OCI-LY7 (cell line): ENCODE measurements at regions of chr18 and their contacts with region 1.

Region 1: DNA sequence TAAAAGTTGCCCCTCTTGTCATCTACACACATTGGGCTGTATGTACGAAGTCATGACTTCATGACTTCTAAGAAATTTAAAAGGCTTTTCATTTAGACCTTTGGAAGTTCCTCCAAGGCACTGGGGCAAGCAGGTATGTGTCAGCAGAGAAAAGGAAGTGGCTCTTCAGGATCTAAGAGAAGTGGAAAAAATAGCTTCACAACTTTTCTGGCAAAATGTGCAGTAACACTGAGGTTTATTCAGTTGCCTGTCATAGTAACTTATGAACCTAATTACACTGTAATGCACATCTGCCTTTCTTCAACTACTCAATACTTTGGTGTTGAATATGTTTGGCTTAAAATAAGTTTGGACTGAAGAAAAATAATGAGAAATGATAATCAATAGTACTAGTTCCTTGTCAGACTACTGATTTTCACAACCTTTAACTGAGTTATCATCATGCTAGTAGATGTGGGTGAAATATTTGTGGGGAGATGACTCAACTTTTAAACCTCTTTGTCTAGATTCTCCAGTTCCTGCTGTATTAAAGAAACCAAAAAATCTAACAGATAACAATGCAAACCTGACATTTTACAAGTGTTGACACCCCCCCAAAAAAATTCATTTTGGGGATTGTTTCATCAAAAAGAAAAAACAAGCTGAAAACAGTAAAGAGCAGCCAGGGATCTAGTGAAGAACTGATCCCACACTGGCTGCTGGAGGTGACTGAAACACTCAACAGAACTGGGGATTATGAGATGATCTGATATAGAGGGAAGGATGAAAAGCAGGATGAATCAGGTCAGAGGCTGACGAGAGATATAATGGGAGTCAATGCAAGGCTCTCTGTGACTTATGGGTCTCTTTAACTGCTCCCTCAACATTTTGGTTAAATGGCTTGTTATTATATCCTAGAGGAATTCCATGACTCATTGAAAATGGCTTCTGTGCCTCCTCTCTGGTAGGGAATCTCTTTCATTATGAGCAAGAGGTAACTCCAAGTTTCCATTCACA is 84.6 kb downstream of the COLEC12 start:
- DNase-seq: no peak
- H3K4me3 ChIP-seq: no peak overlapping the region
- H3K27ac ChIP-seq: no peak overlapping the region
- H3K4me1 ChIP-seq: no peaks in the 10 kb centered on the region
- CTCF ChIP-seq: no peak

Region 2: DNA sequence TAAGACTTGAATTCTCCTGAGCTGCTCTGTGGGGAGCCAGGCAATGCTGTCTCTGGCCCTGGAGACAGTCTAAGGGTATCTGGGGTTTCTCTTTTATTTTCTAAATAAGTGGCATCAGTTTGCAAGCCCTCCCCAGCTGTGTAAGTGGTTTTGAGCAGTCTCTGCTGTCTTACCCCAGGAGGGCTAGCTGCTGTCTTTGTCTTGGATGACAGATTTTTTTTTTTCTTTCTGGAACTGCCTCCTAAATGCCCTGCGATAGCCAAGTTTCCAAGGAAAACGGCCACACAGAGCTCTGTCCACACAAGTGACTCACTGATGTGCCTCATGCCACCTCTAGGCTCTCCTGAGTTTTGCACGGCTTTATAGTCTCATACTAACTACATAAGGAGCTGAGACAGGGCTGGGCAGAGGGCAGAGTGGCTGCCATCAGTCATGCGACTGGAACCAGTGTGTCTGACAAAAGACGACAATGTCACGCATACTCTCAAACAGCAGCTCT is 110.9 kb before region 1 on chr18:
- CTCF ChIA-PET with region 1: no interaction called
- POLR2A ChIA-PET with region 1: no interaction called
- intact Hi-C with region 1: no loop called
- DNase-seq: no peak
- H3K4me3 ChIP-seq: no peak overlapping the region
- H3K27ac ChIP-seq: no peak overlapping the region
- H3K4me1 ChIP-seq: no peaks in the 10 kb centered on the region
- CTCF ChIP-seq: no peak

Region 3: DNA sequence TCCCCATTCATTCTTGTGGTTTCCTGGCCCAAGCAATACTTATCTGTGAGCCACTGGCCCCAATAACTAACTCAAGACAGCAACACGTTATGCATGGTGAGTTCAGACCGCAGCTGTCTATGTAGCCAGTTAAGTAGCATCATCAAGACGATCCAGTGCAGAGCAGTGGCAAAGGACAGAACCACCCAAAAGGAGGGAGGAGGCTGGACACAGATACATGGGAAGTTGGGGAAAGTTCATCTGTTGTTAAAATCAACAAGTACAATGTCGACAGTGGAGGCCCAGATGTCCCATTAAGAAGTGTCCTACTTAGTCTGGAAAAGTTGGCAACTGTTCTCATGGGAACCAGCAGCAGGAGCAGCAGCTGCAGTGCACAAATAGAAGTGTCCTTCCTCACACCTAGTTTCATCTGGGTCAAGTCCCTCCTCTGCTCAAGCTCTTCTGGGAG is 41.2 kb before region 1 on chr18:
- CTCF ChIA-PET with region 1: no interaction called
- POLR2A ChIA-PET with region 1: no interaction called
- intact Hi-C with region 1: no loop called
- DNase-seq: no peak
- H3K4me3 ChIP-seq: no peak overlapping the region
- H3K27ac ChIP-seq: no peak overlapping the region
- H3K4me1 ChIP-seq: no peaks in the 10 kb centered on the region
- CTCF ChIP-seq: no peak

Region 4: DNA sequence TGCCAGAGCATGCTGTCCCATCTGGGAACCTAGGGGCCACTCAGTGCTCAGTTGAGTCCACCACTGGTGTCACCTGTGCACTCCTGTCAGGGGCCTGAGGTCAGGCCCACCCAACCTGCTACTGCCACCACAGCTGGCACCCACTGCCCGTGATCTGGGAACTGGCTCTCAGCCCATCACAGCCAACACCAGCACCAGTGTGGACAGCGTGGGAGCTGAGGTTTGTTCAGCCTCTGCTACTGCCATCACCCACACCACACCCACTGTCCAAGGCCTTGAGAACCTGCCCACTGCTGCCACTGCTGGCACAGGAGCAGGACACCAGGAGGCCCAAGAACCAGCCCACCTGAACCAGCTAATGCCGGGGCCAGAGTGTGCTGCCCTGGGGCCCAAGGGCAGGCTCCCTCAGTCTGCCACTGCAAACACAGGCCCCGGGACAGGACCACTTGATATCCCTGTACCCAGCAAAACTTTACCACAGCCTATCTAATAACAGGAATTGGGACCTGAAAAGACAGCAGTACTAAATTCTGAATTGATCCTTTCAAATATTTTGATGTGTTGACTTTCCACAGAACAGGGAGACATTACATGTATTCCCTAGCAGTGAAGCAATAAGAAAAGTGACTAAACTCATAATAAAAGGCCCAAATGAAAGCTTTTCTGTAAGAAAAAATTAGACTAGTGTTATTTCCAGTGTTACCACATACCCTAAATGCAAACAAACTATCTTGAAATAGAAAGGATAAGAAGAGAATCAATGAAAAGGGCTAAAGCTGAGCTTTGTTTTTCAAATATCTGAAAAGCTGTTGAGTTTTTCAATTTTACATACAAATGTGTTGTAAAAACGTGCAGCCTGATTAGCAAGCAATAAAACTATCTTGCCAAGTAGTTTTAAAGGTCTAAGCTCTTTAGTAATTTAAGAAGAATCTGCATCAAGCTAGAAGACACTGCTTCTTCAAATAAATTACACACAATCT is 1514.7 kb after region 1 on chr18:
- CTCF ChIA-PET with region 1: no interaction called
- POLR2A ChIA-PET with region 1: interaction called, 10 read pairs
- intact Hi-C with region 1: no loop called
- DNase-seq: no peak
- H3K4me3 ChIP-seq: no peak overlapping the region
- H3K27ac ChIP-seq: no peak overlapping the region
- H3K4me1 ChIP-seq: no peaks in the 10 kb centered on the region
- CTCF ChIP-seq: no peak